CD4-positive, alpha-beta T cell (primary cell): ENCODE measurements at regions of chr17 and their contacts with region 1.

Region 1: GRCh38 chr17:75046582-75047289 is at the starts of genes ATP5PD and KCTD2:
- DNase-seq: peak; percentile 83 to 97 (median 92)
- ATAC-seq: peak; percentile 92
- H3K4me3 ChIP-seq: peak within 1 kb of the TSS; percentile 84
- H3K4me3 Mint-ChIP-seq: peak within 1 kb of the TSS; percentile 100
- H3K27ac ChIP-seq: peak within 1 kb of the TSS; percentile 82 to 84
- H3K27ac Mint-ChIP-seq: peak within 1 kb of the TSS; percentile 100
- H3K4me1 ChIP-seq: peaks cover 20% of the 10 kb centered on the region
- H3K4me1 Mint-ChIP-seq: peaks cover 52% of the 10 kb centered on the region
- H3K27me3 ChIP-seq: no peaks in the 10 kb centered on the region
- H3K27me3 Mint-ChIP-seq: no peaks in the 10 kb centered on the region
- CTCF ChIP-seq: no peak
- total RNA-seq, gene ATP5PD: 98.5 to 112 TPM
- total RNA-seq, gene KCTD2: 26.1 to 28.0 TPM

Region 2: GRCh38 chr17:74987418-74987908 is 59.3 kb before region 1 on chr17 and contains the start of gene CDR2L:
- CTCF ChIA-PET with region 1: no interaction called
- POLR2A ChIA-PET with region 1: interaction called, 10 read pairs
- intact Hi-C with region 1: loop called in 1 of 2 experiments (anchors 5 kb)
- DNase-seq: peak; percentile 80 to 97 (median 90)
- ATAC-seq: peak; percentile 97
- H3K4me3 ChIP-seq: peak within 1 kb of the TSS; percentile 55
- H3K4me3 Mint-ChIP-seq: peak within 1 kb of the TSS; percentile 85
- H3K27ac ChIP-seq: no peak within 1 kb of the TSS
- H3K27ac Mint-ChIP-seq: peak within 1 kb of the TSS; percentile 19
- H3K4me1 ChIP-seq: peaks cover 21% of the 10 kb centered on the region
- H3K4me1 Mint-ChIP-seq: peaks cover 15% of the 10 kb centered on the region
- H3K27me3 ChIP-seq: peaks cover 7 to 9% of the 10 kb centered on the region in 2 experiments
- H3K27me3 Mint-ChIP-seq: peaks cover 4% of the 10 kb centered on the region
- CTCF ChIP-seq: no peak
- total RNA-seq, gene CDR2L: 0.08 TPM in 1 of 2 experiments, not detected in the other

Region 3: GRCh38 chr17:75024686-75025397 is 21.9 kb before region 1 on chr17:
- CTCF ChIA-PET with region 1: no interaction called
- POLR2A ChIA-PET with region 1: interaction called, 18 read pairs
- intact Hi-C with region 1: no loop called
- DNase-seq: peak in 8 of 14 experiments; percentile 17 to 55 (median 36)
- ATAC-seq: peak; percentile 69
- H3K4me3 ChIP-seq: no peak overlapping the region
- H3K4me3 Mint-ChIP-seq: peak overlapping the region; percentile 56
- H3K27ac ChIP-seq: no peak overlapping the region
- H3K27ac Mint-ChIP-seq: peak overlapping the region; percentile 70
- H3K4me1 ChIP-seq: peaks cover 13% of the 10 kb centered on the region
- H3K4me1 Mint-ChIP-seq: peaks cover 32% of the 10 kb centered on the region
- H3K27me3 ChIP-seq: no peaks in the 10 kb centered on the region
- H3K27me3 Mint-ChIP-seq: no peaks in the 10 kb centered on the region
- CTCF ChIP-seq: no peak

Region 4: GRCh38 chr17:75069783-75070182 is 23.0 kb after region 1 on chr17:
- CTCF ChIA-PET with region 1: no interaction called
- POLR2A ChIA-PET with region 1: interaction called, 15 read pairs
- intact Hi-C with region 1: no loop called
- DNase-seq: peak in 3 of 14 experiments; percentile 19 to 42 (median 36)
- ATAC-seq: no peak
- H3K4me3 ChIP-seq: no peak overlapping the region
- H3K4me3 Mint-ChIP-seq: peak overlapping the region; percentile 50
- H3K27ac ChIP-seq: no peak overlapping the region
- H3K27ac Mint-ChIP-seq: peak overlapping the region; percentile 50
- H3K4me1 ChIP-seq: peaks cover 31% of the 10 kb centered on the region
- H3K4me1 Mint-ChIP-seq: peaks cover 30% of the 10 kb centered on the region
- H3K27me3 ChIP-seq: no peaks in the 10 kb centered on the region
- H3K27me3 Mint-ChIP-seq: no peaks in the 10 kb centered on the region
- CTCF ChIP-seq: peak; percentile 23